ENCODE measurements at regions of chr6 and their contacts with region 1.

Region 1: GRCh38 chr6:18323935-18324705 is 59.8 kb upstream of the DEK start:
- DNase-seq: no peak
- ATAC-seq: peak; percentile 49
- H3K4me3 Mint-ChIP-seq: no peak overlapping the region
- H3K27ac Mint-ChIP-seq: no peak overlapping the region
- H3K4me1 Mint-ChIP-seq: peaks cover 14% of the 10 kb centered on the region
- H3K27me3 Mint-ChIP-seq: peaks cover 10% of the 10 kb centered on the region

Region 2: DNA sequence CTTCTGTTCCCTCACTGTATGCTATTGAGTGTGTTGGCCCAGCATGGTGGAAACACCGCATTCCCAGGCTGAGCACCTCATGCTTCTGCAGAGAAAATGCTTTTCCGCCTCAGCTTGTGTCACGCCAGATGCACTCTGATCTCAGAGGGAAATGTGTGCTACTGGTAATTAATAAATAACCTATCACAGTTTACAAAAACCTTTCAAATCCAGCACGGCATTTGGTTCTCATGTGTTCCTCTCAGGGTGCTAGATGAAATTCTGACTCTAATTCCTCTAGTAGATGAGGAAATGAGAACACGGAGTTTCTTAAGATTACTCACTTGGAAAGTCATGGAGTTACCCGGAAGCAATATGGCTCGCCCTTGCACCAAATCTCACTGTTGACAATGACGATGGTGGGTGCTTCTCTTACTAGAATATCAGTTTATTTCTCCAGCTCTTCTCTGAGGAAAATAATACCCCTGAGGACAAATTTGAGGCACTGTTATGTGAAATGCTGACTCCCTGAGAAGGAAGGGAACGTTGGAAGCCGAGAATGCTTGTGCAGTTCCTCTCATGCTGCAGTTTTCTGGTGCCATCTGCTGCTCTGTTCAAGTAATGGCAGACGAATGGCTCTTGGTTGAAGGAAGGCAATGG is 179.6 kb after region 1 on chr6:
- CTCF ChIA-PET with region 1: interaction called, 153 read pairs
- POLR2A ChIA-PET with region 1: no interaction called
- intact Hi-C with region 1: loop called (anchors 1 kb)
- DNase-seq: peak; percentile 55
- ATAC-seq: peak; percentile 68
- H3K4me3 Mint-ChIP-seq: no peak overlapping the region
- H3K27ac Mint-ChIP-seq: no peak overlapping the region
- H3K4me1 Mint-ChIP-seq: peaks cover 6% of the 10 kb centered on the region
- H3K27me3 Mint-ChIP-seq: peaks cover 7% of the 10 kb centered on the region

Region 3: DNA sequence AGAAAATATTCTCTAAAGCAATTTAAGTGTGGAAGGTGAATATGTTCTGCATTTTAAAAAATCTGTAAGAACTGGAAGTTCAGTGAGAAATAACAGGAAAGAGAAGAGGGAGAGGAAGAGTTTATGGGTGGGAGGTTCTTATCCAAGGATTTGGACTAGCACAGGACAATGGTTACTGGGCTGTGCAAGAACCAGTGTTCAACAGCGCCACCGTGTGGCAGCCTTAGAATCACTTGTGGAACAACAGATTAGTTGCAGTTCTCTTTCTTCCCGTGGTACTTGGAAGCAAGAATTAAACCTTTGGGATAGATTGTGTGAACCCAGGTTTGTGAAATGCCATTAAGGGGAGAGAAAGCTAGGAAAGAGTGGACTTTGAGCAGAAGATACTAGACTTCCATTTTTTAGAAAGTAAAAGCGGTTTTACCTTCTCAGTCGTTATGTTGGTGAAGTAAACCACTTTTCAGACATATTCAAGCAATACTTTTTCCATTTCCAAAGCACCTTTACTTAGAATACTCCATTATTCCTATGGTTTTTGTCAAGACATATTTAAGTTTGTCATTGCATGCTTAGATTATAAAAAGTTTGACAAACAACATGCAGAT is 499.8 kb after region 1 on chr6:
- CTCF ChIA-PET with region 1: no interaction called
- POLR2A ChIA-PET with region 1: no interaction called
- intact Hi-C with region 1: loop called in 1 of 2 experiments (anchors 10 kb)
- DNase-seq: peak; percentile 76
- ATAC-seq: no peak
- H3K4me3 Mint-ChIP-seq: no peak overlapping the region
- H3K27ac Mint-ChIP-seq: no peak overlapping the region
- H3K4me1 Mint-ChIP-seq: no peaks in the 10 kb centered on the region
- H3K27me3 Mint-ChIP-seq: no peaks in the 10 kb centered on the region